ENCODE measurements at regions of chr7 and their contacts with region 1.

Region 1: GRCh38 chr7:5629941-5630340 is 151.5 kb downstream of the RNF216 start:
- DNase-seq: peak; percentile 82
- ATAC-seq: peak; percentile 86
- H3K4me3 Mint-ChIP-seq: no peak overlapping the region
- H3K27ac Mint-ChIP-seq: peak overlapping the region; percentile 9
- H3K4me1 Mint-ChIP-seq: peaks cover 33% of the 10 kb centered on the region
- H3K27me3 Mint-ChIP-seq: no peaks in the 10 kb centered on the region

Region 2: DNA sequence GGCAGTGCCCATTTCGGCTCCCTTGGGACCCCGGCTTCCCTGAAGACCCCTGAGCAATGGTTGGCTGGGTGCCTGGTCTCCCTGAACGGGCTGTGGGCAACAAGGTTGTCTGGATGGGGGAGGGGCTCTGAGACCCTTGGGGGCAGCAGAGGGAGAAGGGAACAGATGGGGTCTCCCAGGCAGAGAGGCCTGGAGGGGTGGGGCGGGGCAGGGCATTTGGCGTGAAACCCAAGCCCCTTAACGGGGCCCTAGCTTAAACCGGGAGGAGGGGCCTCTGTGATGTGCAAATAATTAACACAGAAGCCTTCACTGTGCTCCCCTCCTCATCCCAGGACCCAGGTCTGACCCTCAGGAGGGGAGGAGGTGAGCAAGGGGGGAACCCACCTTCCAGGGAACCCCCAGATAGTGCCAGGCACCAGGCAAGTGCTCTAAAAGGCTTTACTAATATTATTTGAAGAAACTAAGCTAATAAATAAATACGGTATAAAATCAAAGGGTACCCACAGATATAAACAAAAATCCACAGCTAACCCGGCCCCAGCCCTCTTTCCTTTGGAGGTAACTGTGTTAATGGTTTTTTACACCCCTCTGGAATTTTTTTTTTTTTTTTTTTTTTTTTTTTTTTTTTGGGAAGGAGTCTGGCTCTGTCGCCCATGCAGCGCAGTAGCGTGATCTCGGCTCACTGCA is 19.3 kb before region 1 on chr7:
- CTCF ChIA-PET with region 1: interaction called, 13 read pairs
- DNase-seq: no peak
- ATAC-seq: no peak
- H3K4me3 Mint-ChIP-seq: no peak overlapping the region
- H3K27ac Mint-ChIP-seq: no peak overlapping the region
- H3K4me1 Mint-ChIP-seq: peaks cover 3% of the 10 kb centered on the region
- H3K27me3 Mint-ChIP-seq: no peaks in the 10 kb centered on the region